Left ventricle myocardium superior (tissue), 1 donor: ENCODE measurements at regions of chr6 and their contacts with region 1.

Region 1: DNA sequence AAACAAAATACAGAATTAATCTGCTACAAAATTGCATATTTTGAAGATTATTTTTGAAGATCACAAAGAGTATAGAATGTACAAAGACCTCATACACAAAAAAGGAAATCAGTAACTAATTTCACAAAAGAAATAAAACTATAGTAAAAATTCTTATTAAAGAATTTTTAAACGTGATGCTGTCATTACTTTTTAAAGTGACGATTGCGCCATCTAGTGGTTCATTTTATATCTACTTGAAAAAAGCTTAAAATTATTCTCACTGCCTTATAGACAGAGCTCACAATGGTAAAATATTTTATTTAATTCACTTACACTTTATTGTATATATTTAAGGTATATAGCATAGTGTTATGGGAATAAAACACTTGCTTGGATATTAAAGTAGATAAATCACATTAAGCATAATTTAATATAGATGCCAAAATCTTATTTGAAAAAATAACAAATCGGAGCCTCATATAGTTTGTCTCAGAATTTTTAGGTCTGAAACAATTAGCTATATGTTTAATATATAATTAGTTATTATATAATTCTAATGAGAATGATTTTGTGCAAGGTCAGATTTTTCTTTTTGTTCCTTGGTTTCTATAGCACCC is 128.8 kb downstream of the PHF3 start:
- DNase-seq: no peak
- ATAC-seq: no peak

Region 2: GRCh38 chr6:63352587-63353285 is 411.7 kb before region 1 on chr6:
- intact Hi-C with region 1: loop called (anchors 10 kb)
- DNase-seq: no peak
- ATAC-seq: peak; percentile 80

Region 3: GRCh38 chr6:63598049-63599036 is 166.1 kb before region 1 on chr6:
- intact Hi-C with region 1: loop called (anchors 2 kb)
- DNase-seq: peak; percentile 58
- ATAC-seq: peak; percentile 96

Region 4: DNA sequence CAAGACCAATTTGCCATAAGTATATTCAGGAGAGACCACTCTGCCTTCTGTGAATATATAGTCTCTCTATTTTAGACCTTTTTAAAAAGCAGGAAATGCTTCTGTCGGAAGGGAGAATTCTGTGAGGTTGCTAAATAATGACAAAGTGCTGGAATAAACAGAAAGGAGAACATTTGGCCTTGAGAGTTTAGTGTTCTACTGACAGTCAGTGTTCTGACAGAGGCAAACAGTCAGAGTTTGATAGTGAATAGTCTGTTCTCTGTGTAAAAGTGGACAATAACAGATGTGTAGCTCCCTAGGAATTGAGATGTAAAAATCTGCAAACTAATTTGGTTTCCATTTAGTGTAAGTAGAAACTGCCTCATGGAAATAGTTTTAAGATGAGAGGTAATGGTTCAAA is 91.9 kb after region 1 on chr6:
- intact Hi-C with region 1: no loop called
- DNase-seq: no peak
- ATAC-seq: no peak